ENCODE measurements at regions of chr10 and their contacts with region 1.

Region 1: DNA sequence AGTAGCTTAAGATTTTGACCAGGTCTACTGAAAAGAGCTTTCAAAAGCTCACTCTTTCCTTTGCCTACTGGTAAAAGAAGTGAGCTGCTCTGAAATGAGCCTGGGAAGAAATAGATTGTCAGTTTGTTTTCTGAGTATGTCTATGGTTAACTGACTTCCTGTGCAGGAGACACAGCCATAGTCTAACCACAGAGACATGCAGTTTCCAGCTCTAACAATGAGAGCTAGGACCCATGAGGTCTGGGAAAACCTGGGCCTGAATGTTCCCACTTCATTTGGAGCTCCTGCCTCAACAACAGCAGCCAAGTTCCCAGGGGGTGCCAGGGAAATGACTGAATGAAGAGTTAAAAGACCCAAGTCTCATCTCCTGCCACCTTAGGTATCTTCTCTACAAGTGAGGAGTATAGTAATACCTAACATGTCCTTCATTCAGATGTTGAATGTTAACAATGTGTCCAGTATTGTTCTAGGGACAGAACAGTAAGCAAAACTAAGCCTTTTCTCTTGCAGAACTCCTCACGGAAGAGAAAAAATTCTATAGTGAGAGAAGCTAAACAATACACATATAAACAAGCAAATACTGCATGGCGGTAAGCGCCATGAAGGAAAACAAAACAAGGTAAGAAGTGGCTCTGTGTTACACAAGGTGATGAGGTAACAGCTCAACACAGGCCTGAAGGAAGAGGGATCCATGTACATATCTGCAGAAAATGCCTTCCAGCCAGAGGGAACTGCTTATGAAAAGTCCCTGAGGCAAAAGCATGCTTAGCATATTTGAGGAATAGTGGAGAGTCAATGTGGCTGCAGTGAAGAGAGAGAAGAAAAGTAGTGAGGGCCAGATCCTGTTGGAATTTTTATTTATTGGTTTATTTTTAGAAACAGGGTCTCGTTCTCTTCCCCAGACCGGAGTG is 26.4 kb upstream of the ANKRD1 start:
- DNase-seq: no peak
- ATAC-seq: no peak

Region 2: DNA sequence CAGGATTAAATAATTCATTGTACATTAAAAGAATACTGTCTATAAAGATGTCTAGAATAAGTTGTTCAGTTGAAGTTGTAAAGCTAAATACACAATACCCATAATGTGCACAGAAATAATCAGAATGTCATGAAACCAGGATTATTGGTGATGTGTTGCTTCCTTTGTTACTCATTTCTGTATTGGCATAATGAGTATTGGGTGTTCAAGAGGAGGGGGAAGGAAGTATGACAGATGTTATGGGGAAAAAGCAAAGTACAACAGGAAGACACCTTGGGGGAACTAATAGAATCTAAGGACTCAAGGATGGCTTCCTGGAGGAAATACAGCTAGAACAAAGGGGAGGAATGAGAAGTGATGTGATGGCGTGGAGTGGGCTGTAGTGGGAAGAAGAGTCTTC is 41.4 kb before region 1 on chr10:
- intact Hi-C with region 1: no loop called
- DNase-seq: no peak
- ATAC-seq: no peak

Region 3: DNA sequence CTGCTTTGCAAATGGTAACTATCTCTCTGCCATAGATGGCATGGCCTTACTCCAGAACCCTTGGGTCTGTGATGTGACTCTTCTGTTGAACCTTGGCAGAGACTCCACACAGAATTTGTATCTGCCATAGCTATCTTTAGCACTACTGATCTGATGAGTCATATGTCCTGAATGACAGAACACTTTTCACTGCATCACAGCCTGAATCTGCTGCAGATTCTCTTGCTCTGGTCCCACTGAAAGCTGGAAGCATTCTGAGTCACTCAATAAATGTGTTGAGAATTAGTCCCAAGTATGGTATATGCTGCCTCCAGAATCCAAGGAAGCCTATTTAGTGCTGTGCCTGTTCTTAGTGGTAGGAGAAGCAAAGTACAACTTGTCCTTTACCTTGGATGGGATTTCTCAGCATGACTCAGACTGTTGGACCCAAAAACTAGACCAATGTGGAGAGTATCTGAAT is 13.1 kb after region 1 on chr10:
- intact Hi-C with region 1: loop called in 1 of 2 experiments (anchors 2 kb)
- DNase-seq: no peak
- ATAC-seq: peak; percentile 51 to 84

Measured in left cardiac atrium (tissue), 4 donors.